ENCODE measurements at regions of chr1 and their contacts with region 1.

Region 1: GRCh38 chr1:197614916-197615692 is 160.2 kb downstream of the DENND1B start:
- DNase-seq: no peak
- H3K4me3 ChIP-seq: no peak overlapping the region
- CTCF ChIP-seq: peak; percentile 65

Region 2: DNA sequence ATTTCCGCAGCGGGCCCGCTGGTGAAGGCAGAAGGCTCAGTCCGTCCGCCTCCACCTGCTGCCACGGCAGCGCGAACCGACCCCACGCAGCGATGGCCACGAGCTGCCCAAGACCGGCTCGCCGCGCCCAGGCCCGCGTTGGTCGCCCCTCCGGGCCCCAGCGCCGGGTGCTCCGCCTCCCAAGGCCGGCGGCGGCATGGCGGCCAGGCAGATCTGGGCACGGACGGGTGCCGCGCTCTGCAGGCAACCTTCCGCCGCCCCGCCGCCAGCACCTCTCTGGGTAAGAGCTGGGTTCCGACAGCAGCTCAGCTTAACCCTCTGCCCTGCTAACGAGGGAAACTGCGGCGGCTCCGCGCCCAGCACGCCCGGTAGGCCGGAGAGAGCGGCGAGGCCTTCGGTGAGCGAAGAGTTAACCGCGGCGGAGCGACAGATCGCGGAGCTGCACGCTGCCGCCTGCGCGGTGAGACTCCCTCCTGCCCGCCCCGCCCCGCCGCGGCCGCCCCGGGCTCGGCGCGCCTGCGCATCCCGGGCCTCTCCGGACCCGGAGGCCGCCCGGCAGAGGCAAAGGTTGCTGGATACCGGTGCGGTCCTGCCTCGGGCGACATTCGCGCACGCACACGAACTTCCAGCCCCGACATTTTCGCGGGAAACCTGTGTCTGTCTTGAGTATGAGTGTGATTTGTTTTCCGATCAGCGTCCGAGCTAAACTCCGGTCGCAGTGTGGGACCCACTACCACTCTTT is 287.5 kb after region 1 on chr1 and contains the start of gene C1orf53:
- CTCF ChIA-PET with region 1: interaction called, 19 read pairs
- POLR2A ChIA-PET with region 1: interaction called, 10 read pairs
- DNase-seq: no peak
- H3K4me3 ChIP-seq: peak within 1 kb of the TSS; percentile 79
- CTCF ChIP-seq: no peak

Region 3: DNA sequence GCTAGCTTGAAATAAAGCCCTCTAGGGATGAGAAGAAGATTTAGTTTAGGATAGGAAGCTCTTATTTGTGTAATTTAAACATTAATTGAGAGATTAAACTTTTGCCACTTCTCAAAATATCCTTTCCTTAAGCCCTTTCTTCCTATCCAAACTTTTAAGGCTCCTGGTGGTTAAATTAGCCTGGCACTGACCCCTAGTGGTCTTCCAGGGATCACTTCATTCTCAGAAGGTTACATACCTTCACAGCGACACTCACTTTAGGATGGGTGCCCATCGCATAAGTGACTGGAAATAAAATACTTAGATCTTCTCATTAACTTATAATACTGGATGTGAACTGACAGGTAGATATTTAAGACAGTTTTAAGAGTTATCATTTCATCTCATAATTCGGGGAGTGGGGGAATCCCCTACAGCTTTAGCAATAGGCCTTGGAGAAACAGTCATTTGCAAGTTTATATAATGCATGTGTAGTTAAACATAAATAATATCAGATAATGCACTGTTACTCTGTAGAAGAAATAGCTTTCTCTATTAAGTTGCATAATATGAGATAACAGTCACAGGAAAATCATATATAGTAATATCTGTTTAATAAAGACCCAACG is 309.5 kb after region 1 on chr1:
- CTCF ChIA-PET with region 1: interaction called, 147 read pairs
- POLR2A ChIA-PET with region 1: no interaction called
- DNase-seq: no peak
- H3K4me3 ChIP-seq: no peak overlapping the region
- CTCF ChIP-seq: peak; percentile 43

Region 4: GRCh38 chr1:198088360-198089071 is 473.4 kb after region 1 on chr1:
- CTCF ChIA-PET with region 1: no interaction called
- POLR2A ChIA-PET with region 1: no interaction called
- DNase-seq: no peak
- H3K4me3 ChIP-seq: peak overlapping the region; percentile 42
- CTCF ChIP-seq: peak; percentile 34